T-cell (primary cell): ENCODE measurements at regions of chr21 and their contacts with region 1.

Region 1: GRCh38 chr21:42258153-42258884 is 39.4 kb downstream of the ABCG1 start:
- DNase-seq: peak; percentile 62 to 89 (median 80)
- ATAC-seq: peak; percentile 81 to 94 (median 92)
- H3K4me3 ChIP-seq: no peak overlapping the region
- H3K4me3 Mint-ChIP-seq: no peak overlapping the region
- H3K27ac ChIP-seq: no peak overlapping the region
- H3K27ac Mint-ChIP-seq: peak overlapping the region in 1 of 2 donors; percentile 41
- H3K4me1 ChIP-seq: peaks cover 0 to 25% of the 10 kb centered on the region in 2 experiments
- H3K4me1 Mint-ChIP-seq: peaks cover 33 to 42% (median 37%) of the 10 kb centered on the region in 3 donors
- H3K27me3 ChIP-seq: no peaks in the 10 kb centered on the region
- H3K27me3 Mint-ChIP-seq: no peaks in the 10 kb centered on the region

Region 2: DNA sequence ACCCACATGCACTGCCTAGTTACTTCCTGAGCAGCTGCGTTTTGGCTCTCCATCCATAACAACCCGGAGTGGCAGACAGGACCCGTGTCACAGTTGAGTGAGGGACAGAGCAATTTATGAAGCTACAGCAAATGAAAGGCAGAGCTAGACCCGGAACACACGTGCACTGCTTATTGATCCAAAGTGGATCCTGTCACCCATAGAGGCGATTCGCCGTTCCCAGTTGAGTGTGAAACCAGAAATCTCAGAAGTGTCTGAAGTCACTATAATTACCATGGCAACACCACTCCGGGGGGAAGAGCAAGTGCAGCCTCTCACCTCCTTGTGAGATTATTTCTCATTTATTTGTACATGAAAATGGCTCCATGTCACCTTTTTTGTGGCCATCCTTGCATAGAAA is 1776.6 kb before region 1 on chr21:
- CTCF ChIA-PET with region 1: no interaction called
- POLR2A ChIA-PET with region 1: no interaction called
- DNase-seq: no peak
- ATAC-seq: no peak
- H3K4me3 ChIP-seq: no peak overlapping the region
- H3K4me3 Mint-ChIP-seq: no peak overlapping the region
- H3K27ac ChIP-seq: no peak overlapping the region
- H3K27ac Mint-ChIP-seq: no peak overlapping the region
- H3K4me1 ChIP-seq: no peaks in the 10 kb centered on the region
- H3K4me1 Mint-ChIP-seq: no peaks in the 10 kb centered on the region
- H3K27me3 ChIP-seq: peaks cover 0 to 2% of the 10 kb centered on the region in 2 experiments
- H3K27me3 Mint-ChIP-seq: peaks cover 0 to 4% of the 10 kb centered on the region in 2 donors

Region 3: GRCh38 chr21:42145569-42146272 is 112.6 kb before region 1 on chr21:
- CTCF ChIA-PET with region 1: interaction called, 24 to 32 read pairs
- POLR2A ChIA-PET with region 1: interaction called in 1 of 2 experiments, 3 read pairs
- DNase-seq: peak; percentile 18 to 85 (median 59)
- ATAC-seq: peak; percentile 75 to 90 (median 80)
- H3K4me3 ChIP-seq: no peak overlapping the region
- H3K4me3 Mint-ChIP-seq: no peak overlapping the region
- H3K27ac ChIP-seq: no peak overlapping the region
- H3K27ac Mint-ChIP-seq: no peak overlapping the region
- H3K4me1 ChIP-seq: peaks cover 2 to 11% of the 10 kb centered on the region in 2 experiments
- H3K4me1 Mint-ChIP-seq: peaks cover 6 to 14% (median 7%) of the 10 kb centered on the region in 3 donors
- H3K27me3 ChIP-seq: peaks cover 0 to 21% of the 10 kb centered on the region in 2 experiments
- H3K27me3 Mint-ChIP-seq: peaks cover 0 to 8% of the 10 kb centered on the region in 2 donors

Region 4: DNA sequence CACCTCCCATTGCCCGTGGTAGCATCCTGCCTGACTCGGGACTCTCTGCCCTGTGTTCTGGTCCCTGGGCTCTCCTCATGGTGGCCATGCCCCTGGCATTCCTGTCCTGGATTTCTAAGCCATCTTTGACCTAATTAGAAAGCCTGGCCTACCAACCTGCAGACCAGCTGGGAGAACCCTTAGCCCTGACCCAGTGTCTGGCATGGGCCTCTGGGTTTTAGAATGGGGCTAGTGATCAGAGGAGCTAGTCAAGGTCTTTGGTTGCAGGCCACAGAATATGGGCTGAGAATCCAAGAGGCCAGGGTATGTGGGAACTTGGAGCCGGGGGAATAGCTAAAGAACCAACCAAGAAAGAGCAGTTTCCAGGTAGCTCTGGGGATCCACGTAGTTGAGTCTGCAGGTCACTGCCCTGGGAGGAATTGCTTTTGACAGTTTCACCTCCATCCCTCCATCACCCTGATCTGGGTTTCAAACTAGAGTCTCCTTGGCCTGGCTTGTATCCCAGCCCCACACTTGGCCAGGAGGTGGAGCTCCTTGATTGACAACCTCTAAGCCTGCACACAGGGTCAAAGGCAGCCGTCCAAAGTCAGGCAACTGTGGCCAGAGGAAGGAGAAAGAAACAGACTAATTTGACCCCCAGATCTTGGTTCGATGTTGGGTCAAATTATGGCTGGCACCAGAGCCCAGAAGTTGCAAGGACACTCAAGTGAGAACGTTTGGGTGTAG is 94.1 kb before region 1 on chr21:
- CTCF ChIA-PET with region 1: interaction called, 5 to 18 read pairs
- POLR2A ChIA-PET with region 1: interaction called in 1 of 2 experiments, 3 read pairs
- DNase-seq: peak in 29 of 35 experiments; percentile 14 to 71 (median 40)
- ATAC-seq: peak; percentile 62 to 74 (median 67)
- H3K4me3 ChIP-seq: no peak overlapping the region
- H3K4me3 Mint-ChIP-seq: no peak overlapping the region
- H3K27ac ChIP-seq: no peak overlapping the region
- H3K27ac Mint-ChIP-seq: peak overlapping the region in 1 of 2 donors; percentile 1
- H3K4me1 ChIP-seq: peaks cover 25 to 35% of the 10 kb centered on the region in 2 experiments
- H3K4me1 Mint-ChIP-seq: peaks cover 37 to 48% (median 44%) of the 10 kb centered on the region in 3 donors
- H3K27me3 ChIP-seq: peaks cover 0 to 11% of the 10 kb centered on the region in 2 experiments
- H3K27me3 Mint-ChIP-seq: no peaks in the 10 kb centered on the region

Region 5: DNA sequence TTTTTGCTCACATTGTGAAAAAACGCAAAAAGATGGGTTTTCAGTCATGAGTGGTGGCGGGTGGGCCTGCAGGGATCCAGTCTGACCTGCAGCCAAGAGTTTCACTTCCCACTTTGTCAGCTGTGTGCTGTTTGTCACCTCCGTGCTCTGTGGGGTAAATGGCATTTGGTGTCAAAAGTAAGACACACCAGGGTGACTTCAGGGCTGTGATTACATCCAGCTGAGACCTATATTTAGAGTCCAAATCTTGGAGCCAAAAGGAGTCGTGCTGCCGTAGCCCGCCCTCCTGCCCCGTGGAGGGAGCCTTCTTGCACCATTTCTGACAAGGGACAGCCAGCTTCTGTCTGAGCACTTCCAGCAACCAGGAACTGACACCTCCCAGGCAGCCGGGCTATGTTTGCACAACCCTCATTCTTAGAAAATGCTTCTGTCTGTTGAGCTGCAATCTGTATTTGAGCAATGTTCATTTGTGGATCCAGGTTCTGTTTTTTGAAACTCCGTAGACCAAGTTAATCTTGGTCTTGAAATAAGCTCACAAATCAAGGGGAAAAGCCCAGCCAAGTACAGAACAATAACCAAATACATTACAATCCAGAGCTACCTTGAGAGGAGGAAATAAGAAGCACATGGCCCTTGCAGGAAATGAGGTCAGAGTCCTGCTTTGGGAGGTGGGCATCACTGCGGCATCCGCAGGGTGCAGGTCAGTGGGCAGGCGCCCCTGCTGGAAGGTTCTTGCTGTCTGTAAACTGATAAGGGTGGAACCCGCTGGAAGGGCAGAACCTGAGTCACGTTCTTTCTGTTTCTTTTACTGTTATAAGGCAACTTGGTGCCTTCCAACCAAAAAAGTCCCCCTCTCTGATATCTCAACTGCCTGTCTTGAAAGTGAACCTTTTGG is 25.0 kb before region 1 on chr21:
- CTCF ChIA-PET with region 1: interaction called in 1 of 2 experiments, 24 read pairs
- POLR2A ChIA-PET with region 1: interaction called in 1 of 2 experiments, 7 read pairs
- DNase-seq: peak in 34 of 35 experiments; percentile 55 to 93 (median 86)
- ATAC-seq: peak; percentile 38 to 63 (median 50)
- H3K4me3 ChIP-seq: peak overlapping the region; percentile 0 to 4
- H3K4me3 Mint-ChIP-seq: peak overlapping the region; percentile 38 to 86 (median 66)
- H3K27ac ChIP-seq: peak overlapping the region; percentile 97
- H3K27ac Mint-ChIP-seq: peak overlapping the region; percentile 69 to 78
- H3K4me1 ChIP-seq: peaks cover 87 to 94% of the 10 kb centered on the region in 2 experiments
- H3K4me1 Mint-ChIP-seq: peaks cover 83 to 97% (median 94%) of the 10 kb centered on the region in 3 donors
- H3K27me3 ChIP-seq: no peaks in the 10 kb centered on the region
- H3K27me3 Mint-ChIP-seq: no peaks in the 10 kb centered on the region

Region 6: DNA sequence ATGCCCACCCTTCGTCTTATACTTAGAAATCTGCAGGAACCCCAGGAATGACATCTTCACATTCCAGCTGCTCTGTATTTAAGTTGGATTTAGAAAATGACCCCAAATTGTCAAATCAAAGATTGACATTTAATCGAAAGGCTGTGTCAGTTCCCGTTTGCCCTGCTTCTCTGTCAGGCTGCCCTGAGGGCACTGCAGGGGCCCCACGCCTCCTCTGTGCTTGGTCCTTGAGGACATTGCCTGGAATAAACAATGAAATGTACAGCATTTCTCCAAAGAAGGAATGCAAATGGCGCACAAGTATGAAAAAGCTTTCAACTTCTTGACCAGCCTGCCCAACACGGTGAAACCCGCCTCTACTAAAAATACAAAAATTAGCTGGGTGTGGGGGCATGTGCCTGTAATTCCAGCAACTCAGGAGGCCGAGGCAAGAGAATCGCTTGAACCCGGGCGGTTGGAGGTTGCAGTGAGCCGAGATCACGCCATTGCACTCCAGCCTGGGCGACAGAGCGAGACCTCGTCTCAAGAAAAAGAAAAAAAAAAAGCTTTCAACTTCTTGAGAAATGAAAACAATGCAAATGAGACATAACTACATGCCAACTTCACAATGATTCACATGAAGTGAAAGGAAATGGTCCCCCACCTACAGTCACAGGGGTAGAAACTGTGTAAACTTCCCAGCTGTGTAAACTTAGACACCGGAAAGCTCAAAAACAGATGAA is 134.6 kb after region 1 on chr21:
- CTCF ChIA-PET with region 1: no interaction called
- POLR2A ChIA-PET with region 1: no interaction called
- DNase-seq: peak in 8 of 35 experiments; percentile 20 to 67 (median 37)
- ATAC-seq: peak; percentile 91 to 98 (median 94)
- H3K4me3 ChIP-seq: peak overlapping the region; percentile 3 to 19
- H3K4me3 Mint-ChIP-seq: peak overlapping the region; percentile 21 to 67 (median 37)
- H3K27ac ChIP-seq: peak overlapping the region; percentile 6
- H3K27ac Mint-ChIP-seq: peak overlapping the region; percentile 62 to 68
- H3K4me1 ChIP-seq: peaks cover 43 to 45% of the 10 kb centered on the region in 2 experiments
- H3K4me1 Mint-ChIP-seq: peaks cover 53 to 77% (median 74%) of the 10 kb centered on the region in 3 donors
- H3K27me3 ChIP-seq: no peaks in the 10 kb centered on the region
- H3K27me3 Mint-ChIP-seq: no peaks in the 10 kb centered on the region

Region 7: GRCh38 chr21:42534421-42535378 is 276.4 kb after region 1 on chr21:
- CTCF ChIA-PET with region 1: no interaction called
- POLR2A ChIA-PET with region 1: no interaction called
- DNase-seq: peak in 2 of 35 experiments; percentile 9 to 13
- ATAC-seq: peak in 3 of 4 experiments; percentile 26 to 56 (median 47)
- H3K4me3 ChIP-seq: no peak overlapping the region
- H3K4me3 Mint-ChIP-seq: peak overlapping the region; percentile 2 to 49 (median 34)
- H3K27ac ChIP-seq: no peak overlapping the region
- H3K27ac Mint-ChIP-seq: peak overlapping the region in 1 of 2 donors; percentile 24
- H3K4me1 ChIP-seq: no peaks in the 10 kb centered on the region
- H3K4me1 Mint-ChIP-seq: peaks cover 5 to 40% (median 29%) of the 10 kb centered on the region in 3 donors
- H3K27me3 ChIP-seq: no peaks in the 10 kb centered on the region
- H3K27me3 Mint-ChIP-seq: no peaks in the 10 kb centered on the region